Activated CD4-positive, alpha-beta T cell treated with anti-CD3 and anti-CD28 coated beads, Interleukin-2, amount 10 ng/mL, durations not matched to agents 24 days and 14 days (primary cell): ENCODE measurements at regions of chr13 and their contacts with region 1.

Region 1: GRCh38 chr13:23375001-23375971 is 58.2 kb downstream of the SACS start:
- DNase-seq: peak; percentile 98
- H3K4me3 Mint-ChIP-seq: peak overlapping the region; percentile 79
- H3K27ac Mint-ChIP-seq: peak overlapping the region; percentile 64
- H3K4me1 Mint-ChIP-seq: peaks cover 54% of the 10 kb centered on the region
- H3K27me3 Mint-ChIP-seq: no peaks in the 10 kb centered on the region

Region 2: GRCh38 chr13:23321535-23322241 is 53.6 kb before region 1 on chr13:
- intact Hi-C with region 1: loop called (anchors 2 kb)
- DNase-seq: peak; percentile 73
- H3K4me3 Mint-ChIP-seq: peak overlapping the region; percentile 70
- H3K27ac Mint-ChIP-seq: peak overlapping the region; percentile 23
- H3K4me1 Mint-ChIP-seq: peaks cover 37% of the 10 kb centered on the region
- H3K27me3 Mint-ChIP-seq: peaks cover 8% of the 10 kb centered on the region

Region 3: GRCh38 chr13:23357349-23357748 is 17.9 kb before region 1 on chr13:
- intact Hi-C with region 1: no loop called
- DNase-seq: no peak
- H3K4me3 Mint-ChIP-seq: no peak overlapping the region
- H3K27ac Mint-ChIP-seq: no peak overlapping the region
- H3K4me1 Mint-ChIP-seq: no peaks in the 10 kb centered on the region
- H3K27me3 Mint-ChIP-seq: no peaks in the 10 kb centered on the region

Region 4: GRCh38 chr13:23752111-23753001 is 377.1 kb after region 1 on chr13:
- intact Hi-C with region 1: loop called (anchors 5 kb)
- DNase-seq: no peak
- H3K4me3 Mint-ChIP-seq: no peak overlapping the region
- H3K27ac Mint-ChIP-seq: peak overlapping the region; percentile 46
- H3K4me1 Mint-ChIP-seq: peaks cover 30% of the 10 kb centered on the region
- H3K27me3 Mint-ChIP-seq: peaks cover 2% of the 10 kb centered on the region

Region 5: DNA sequence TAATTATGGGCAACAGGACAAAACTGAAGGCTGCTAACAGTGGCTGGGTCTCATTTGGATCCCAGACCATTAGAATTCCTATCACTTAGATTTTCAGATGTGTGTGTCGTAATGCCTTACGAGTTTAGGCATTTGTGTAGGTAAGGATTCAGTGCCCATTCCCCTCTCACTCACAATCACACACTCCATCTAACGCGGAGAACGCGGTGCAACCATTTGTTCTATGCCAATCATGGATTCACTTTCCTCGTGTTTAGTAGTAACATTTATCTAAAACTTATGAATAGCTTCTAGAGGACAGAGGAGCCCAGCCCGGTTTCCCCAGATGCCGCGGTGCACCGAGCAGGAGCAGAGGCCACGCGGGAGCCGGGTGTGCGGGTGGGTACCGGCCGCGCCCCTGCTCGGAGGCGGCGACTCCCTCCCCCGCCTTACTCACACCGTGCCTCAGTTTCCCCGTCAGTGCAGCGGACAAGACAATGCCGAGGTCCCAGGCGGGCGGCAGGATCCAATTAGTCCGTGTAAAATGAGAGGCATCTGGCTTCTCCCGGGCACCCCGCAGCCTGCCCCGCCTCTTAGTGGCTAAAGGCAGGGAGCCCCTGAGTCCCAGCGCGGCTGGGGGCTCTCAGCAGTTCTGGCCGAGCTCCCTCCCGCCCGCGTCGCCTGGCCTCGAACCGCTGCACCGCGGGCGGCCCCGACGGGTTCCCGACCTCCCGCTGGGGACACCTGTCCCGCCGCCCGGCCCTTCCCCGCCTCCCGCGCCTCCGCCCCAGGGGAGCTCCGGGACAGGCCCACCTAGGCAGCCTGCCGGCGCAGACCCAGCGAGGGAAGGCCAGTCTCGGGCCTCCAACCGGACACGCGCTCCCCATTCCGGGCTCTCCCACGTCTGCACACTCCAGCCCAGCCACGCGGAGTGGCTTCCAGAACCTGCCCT is 528.0 kb after region 1 on chr13:
- intact Hi-C with region 1: no loop called
- DNase-seq: no peak
- H3K4me3 Mint-ChIP-seq: no peak overlapping the region
- H3K27ac Mint-ChIP-seq: no peak overlapping the region
- H3K4me1 Mint-ChIP-seq: peaks cover 6% of the 10 kb centered on the region
- H3K27me3 Mint-ChIP-seq: peaks cover 54% of the 10 kb centered on the region

Region 6: GRCh38 chr13:23960566-23961156 is 585.4 kb after region 1 on chr13:
- intact Hi-C with region 1: loop called (anchors 10 kb)
- DNase-seq: peak; percentile 75
- H3K4me3 Mint-ChIP-seq: no peak overlapping the region
- H3K27ac Mint-ChIP-seq: no peak overlapping the region
- H3K4me1 Mint-ChIP-seq: peaks cover 38% of the 10 kb centered on the region
- H3K27me3 Mint-ChIP-seq: peaks cover 5% of the 10 kb centered on the region

Region 7: GRCh38 chr13:24264976-24265375 is 889.7 kb after region 1 on chr13:
- intact Hi-C with region 1: loop called (anchors 5 kb)
- DNase-seq: peak; percentile 94
- H3K4me3 Mint-ChIP-seq: peak overlapping the region; percentile 78
- H3K27ac Mint-ChIP-seq: peak overlapping the region; percentile 66
- H3K4me1 Mint-ChIP-seq: peaks cover 87% of the 10 kb centered on the region
- H3K27me3 Mint-ChIP-seq: no peaks in the 10 kb centered on the region